ENCODE measurements at regions of chr2 and their contacts with region 1.

Region 1: GRCh38 chr2:172555522-172556283 is at the start of gene PDK1:
- DNase-seq: peak; percentile 83
- ATAC-seq: peak; percentile 96
- H3K4me3 ChIP-seq: peak within 1 kb of the TSS; percentile 86 to 96 (median 92)
- H3K27ac ChIP-seq: peak within 1 kb of the TSS; percentile 77
- H3K4me1 ChIP-seq: peaks cover 43% of the 10 kb centered on the region
- H3K27me3 ChIP-seq: no peaks in the 10 kb centered on the region; a peak in 1 of 5 replicates
- CTCF ChIP-seq: peak; percentile 22; the same call in 1 of the 2 replicates
- EP300 ChIP-seq: no peak
- POLR2A ChIP-seq: peak; percentile 95 to 96
- RAD21 ChIP-seq: 0 out of 2 replicates have a peak, but pooled peaks have one; percentile 52
- total RNA-seq, gene PDK1: 11.9 and 12.0 TPM in 2 replicates

Region 2: DNA sequence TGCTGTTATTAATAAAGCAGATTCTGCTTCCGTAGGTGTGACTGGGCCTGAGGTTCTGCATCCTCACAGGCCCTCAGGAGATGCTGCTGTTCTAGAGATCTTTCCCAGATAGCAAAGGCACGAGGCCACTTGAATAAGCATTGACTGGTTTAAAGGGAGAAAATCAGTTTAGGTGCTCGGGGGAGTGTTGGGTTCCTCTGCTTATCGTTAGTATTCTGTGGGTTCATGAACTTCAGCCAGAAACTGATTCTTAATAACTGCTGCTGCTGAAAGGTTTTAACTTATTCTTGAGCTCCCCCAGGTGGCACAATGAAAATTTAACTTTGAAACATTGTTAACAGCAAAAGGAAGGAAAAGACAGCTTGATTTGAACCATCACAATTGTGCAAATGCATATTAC is 71.5 kb before region 1 on chr2:
- CTCF ChIA-PET with region 1: no interaction called
- POLR2A ChIA-PET with region 1: interaction called, 5 read pairs
- in situ Hi-C with region 1: no loop called
- intact Hi-C with region 1: loop called (anchors 5 kb)
- DNase-seq: peak; percentile 41
- ATAC-seq: no peak
- H3K4me3 ChIP-seq: no peak overlapping the region
- H3K27ac ChIP-seq: no peak overlapping the region
- H3K4me1 ChIP-seq: peaks cover 42% of the 10 kb centered on the region
- H3K27me3 ChIP-seq: no peaks in the 10 kb centered on the region
- CTCF ChIP-seq: peak; percentile 58
- EP300 ChIP-seq: no peak
- POLR2A ChIP-seq: no peak
- RAD21 ChIP-seq: peak; percentile 53; the same call in 1 of the 2 replicates

Region 3: GRCh38 chr2:172588931-172589330 is 33.2 kb after region 1 on chr2:
- CTCF ChIA-PET with region 1: no interaction called
- POLR2A ChIA-PET with region 1: no interaction called
- in situ Hi-C with region 1: no loop called
- intact Hi-C with region 1: no loop called
- DNase-seq: no peak
- ATAC-seq: no peak
- H3K4me3 ChIP-seq: no peak overlapping the region
- H3K27ac ChIP-seq: no peak overlapping the region
- H3K4me1 ChIP-seq: no peaks in the 10 kb centered on the region
- H3K27me3 ChIP-seq: no peaks in the 10 kb centered on the region
- CTCF ChIP-seq: no peak
- EP300 ChIP-seq: no peak
- POLR2A ChIP-seq: no peak
- RAD21 ChIP-seq: no peak